B cell (primary cell): ENCODE measurements at regions of chr16 and their contacts with region 1.

Region 1: DNA sequence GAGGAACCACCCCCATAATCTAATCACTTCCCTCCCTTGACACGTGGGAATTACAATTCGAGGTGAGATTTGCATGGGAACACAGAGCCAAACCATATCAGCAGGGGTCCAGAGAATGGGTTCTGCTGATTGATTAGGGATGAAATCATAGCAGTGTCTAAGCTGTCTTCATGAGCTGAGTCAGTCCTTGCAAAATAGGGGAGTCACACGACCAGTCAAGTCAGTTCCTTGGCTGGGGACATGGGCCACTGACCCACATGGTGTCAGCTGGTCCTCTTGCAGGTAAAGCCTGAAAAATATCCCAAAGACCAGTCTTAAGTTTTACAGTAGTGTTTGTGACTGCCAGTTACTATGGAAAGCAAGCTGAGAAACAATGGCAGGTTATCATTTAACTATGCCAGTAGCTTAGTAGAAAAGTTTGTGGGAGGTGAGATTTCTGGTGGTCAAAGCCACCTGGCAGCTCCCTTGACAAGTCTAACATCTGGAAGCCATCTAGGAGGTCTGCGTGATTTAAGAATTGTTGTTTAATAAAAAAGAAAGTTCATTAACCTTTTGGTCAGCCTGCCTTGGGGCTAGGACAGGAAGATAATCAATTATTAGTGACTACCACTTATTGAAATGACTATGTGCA is 15.7 kb upstream of the ATF7IP2 start:
- DNase-seq: no peak
- ATAC-seq: no peak
- H3K4me3 ChIP-seq: no peak overlapping the region
- H3K4me3 Mint-ChIP-seq: no peak overlapping the region
- H3K27ac ChIP-seq: no peak overlapping the region
- H3K27ac Mint-ChIP-seq: no peak overlapping the region
- H3K4me1 ChIP-seq: no peaks in the 10 kb centered on the region
- H3K4me1 Mint-ChIP-seq: no peaks in the 10 kb centered on the region
- H3K27me3 ChIP-seq: no peaks in the 10 kb centered on the region
- H3K27me3 Mint-ChIP-seq: no peaks in the 10 kb centered on the region
- CTCF ChIP-seq: no peak

Region 2: DNA sequence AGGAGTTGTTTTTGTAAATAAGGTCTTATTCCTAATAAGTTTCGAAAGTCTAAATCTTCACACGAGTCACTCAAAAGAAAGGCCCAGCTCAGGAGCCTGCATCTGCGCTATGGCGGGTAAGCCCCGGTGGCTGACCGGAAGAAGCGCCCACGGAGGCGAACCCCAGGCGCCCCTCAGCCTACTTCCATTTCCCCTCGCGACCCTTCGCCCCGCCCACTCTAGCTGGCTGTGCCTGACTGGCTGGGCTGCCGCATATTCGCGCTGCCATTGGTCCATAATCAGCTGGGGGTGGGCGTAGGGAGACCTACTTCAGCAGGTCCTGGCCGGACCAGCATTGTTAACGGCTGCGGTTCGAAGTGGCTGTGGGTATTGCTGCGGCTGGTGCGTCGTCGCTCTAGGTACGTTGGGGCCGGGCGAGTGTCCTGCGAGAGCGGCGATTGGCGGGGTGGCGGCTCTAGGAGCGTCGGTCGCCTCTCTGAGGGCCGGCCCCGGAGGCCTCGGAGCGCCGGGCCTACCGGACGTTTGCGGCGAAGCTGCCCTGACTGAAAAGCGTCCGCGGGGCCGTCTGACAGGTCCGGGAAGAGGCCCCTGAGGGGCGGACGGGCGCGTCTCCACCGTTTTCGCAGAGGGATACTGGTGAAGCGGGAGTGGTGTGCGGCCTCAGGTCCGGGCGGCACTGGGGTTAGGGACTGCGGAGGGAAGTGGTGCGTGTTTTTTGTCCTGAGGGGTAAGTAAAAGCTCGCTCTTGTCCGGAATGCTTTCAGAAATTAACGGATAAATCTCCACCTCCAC is 15.7 kb after region 1 on chr16 and contains the start of gene ATF7IP2:
- CTCF ChIA-PET with region 1: no interaction called
- POLR2A ChIA-PET with region 1: no interaction called
- intact Hi-C with region 1: no loop called
- DNase-seq: peak; percentile 93
- ATAC-seq: peak; percentile 99
- H3K4me3 ChIP-seq: peak within 1 kb of the TSS; percentile 72 to 97 (median 93)
- H3K4me3 Mint-ChIP-seq: peak within 1 kb of the TSS; percentile 100
- H3K27ac ChIP-seq: peak within 1 kb of the TSS; percentile 72 to 86
- H3K27ac Mint-ChIP-seq: peak within 1 kb of the TSS; percentile 99
- H3K4me1 ChIP-seq: peaks cover 11 to 20% of the 10 kb centered on the region in 2 donors
- H3K4me1 Mint-ChIP-seq: peaks cover 45% of the 10 kb centered on the region
- H3K27me3 ChIP-seq: no peaks in the 10 kb centered on the region
- H3K27me3 Mint-ChIP-seq: no peaks in the 10 kb centered on the region
- CTCF ChIP-seq: no peak
- total RNA-seq, gene ATF7IP2: 63.7 and 67.5 TPM in 2 replicates

Region 3: DNA sequence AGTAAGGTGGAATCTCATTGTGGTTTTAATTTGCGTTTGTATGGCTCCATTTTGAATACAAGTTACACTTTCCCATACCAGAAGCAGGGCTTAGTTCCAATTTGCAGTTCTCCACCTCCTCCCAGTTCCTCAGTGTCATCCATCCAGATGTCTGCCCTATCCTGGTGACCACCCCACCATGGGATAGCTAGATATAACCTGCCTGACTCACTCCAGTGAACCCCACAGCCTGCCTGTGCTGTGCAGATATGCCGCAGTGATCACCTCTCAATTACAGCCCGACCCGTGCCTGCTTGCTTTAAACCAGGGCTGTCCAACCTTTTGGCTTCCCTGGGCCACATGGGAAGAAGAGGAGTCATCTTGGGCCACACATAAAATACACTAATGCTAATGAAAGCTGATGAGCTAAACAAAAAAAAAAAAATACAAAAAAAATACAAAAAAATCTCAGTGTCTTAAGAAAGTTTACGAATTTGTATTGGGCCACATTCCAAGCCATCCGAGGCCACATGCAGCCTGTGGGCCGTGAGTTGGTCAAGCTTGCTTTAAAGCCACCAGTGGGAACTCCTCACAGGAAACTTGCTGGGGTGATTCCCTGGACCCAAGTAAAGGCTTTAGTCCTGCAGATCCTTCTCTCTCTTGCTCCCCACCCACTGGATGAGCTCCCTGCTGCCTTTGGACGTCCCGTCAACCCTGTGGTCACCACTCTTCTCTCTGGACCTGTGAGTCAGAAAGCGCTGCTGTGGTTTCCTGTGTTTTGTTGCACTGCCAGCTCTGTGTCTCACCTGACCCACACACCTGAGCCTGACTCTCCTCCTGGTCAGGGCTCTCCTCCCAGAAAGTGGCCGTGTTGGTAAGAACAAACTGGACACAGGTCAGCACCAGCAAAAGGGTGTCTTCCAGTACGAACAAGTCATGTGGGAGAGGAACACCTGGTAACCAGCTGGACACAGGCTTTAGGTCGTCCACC is 127.2 kb after region 1 on chr16:
- CTCF ChIA-PET with region 1: no interaction called
- POLR2A ChIA-PET with region 1: interaction called, 13 read pairs
- intact Hi-C with region 1: no loop called
- DNase-seq: no peak
- ATAC-seq: no peak
- H3K4me3 ChIP-seq: no peak overlapping the region
- H3K4me3 Mint-ChIP-seq: no peak overlapping the region
- H3K27ac ChIP-seq: no peak overlapping the region
- H3K27ac Mint-ChIP-seq: no peak overlapping the region
- H3K4me1 ChIP-seq: peaks cover 8 to 11% of the 10 kb centered on the region in 2 donors
- H3K4me1 Mint-ChIP-seq: peaks cover 8% of the 10 kb centered on the region
- H3K27me3 ChIP-seq: no peaks in the 10 kb centered on the region
- H3K27me3 Mint-ChIP-seq: no peaks in the 10 kb centered on the region
- CTCF ChIP-seq: no peak